ENCODE measurements at regions of chr5 and their contacts with region 1.

Region 1: GRCh38 chr5:147628058-147628895 is 118.4 kb upstream of the DPYSL3 start:
- DNase-seq: peak; percentile 55
- ATAC-seq: peak; percentile 98
- H3K4me3 ChIP-seq: no peak overlapping the region
- H3K27ac ChIP-seq: no peak overlapping the region
- H3K4me1 ChIP-seq: no peaks in the 10 kb centered on the region
- H3K27me3 ChIP-seq: peaks cover 6% of the 10 kb centered on the region
- CTCF ChIP-seq: peak; percentile 67
- POLR2A ChIP-seq: no peak
- RAD21 ChIP-seq: peak; percentile 62

Region 2: DNA sequence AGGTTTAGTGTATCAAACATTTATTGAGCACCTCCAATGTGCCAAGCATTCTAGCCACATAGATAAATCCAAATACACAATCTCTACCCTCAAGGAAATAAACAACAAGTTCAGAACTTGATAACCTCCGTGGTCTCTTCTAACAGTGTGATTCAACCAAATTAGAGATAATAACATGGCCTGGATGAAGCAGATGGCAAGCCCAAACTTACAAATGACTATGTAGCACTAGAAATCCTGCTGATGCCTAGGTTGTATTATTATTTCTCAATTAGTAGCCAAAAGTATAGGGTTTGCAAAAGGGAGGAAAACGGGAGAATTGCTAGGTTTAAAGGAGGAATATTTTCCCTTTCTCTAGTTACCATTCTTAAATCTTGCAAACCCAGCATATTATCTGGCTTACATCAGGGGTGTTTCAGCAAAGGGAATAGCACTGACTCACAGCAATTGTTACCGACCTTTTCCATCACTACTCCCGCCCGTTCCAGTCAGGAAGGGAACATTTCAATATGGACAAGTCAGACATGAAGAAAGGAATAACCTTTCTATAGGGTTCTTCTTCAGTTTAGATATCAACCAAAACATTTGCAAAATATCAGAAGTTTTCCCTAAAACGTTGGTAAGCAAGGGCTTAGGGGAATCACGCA is 120.7 kb before region 1 on chr5:
- CTCF ChIA-PET with region 1: no interaction called
- POLR2A ChIA-PET with region 1: no interaction called
- dilution Hi-C with region 1: no loop called
- in situ Hi-C with region 1: no loop called
- intact Hi-C with region 1: no loop called
- DNase-seq: peak; percentile 78
- ATAC-seq: peak; percentile 16; the same call in 1 of the 2 replicates
- H3K4me3 ChIP-seq: peak overlapping the region; percentile 56; the same call in 1 of the 2 replicates
- H3K27ac ChIP-seq: no peak overlapping the region
- H3K4me1 ChIP-seq: peaks cover 8% of the 10 kb centered on the region
- H3K27me3 ChIP-seq: no peaks in the 10 kb centered on the region
- CTCF ChIP-seq: no peak
- POLR2A ChIP-seq: no peak
- RAD21 ChIP-seq: 0 out of 2 replicates have a peak, but pooled peaks have one; percentile 2

Region 3: GRCh38 chr5:147822686-147823491 is 194.6 kb after region 1 on chr5:
- CTCF ChIA-PET with region 1: interaction called, 16 read pairs
- POLR2A ChIA-PET with region 1: no interaction called
- dilution Hi-C with region 1: no loop called
- in situ Hi-C with region 1: loop called (anchors 5 kb)
- intact Hi-C with region 1: loop called (anchors 1 kb)
- DNase-seq: peak; percentile 61
- ATAC-seq: peak; percentile 85
- H3K4me3 ChIP-seq: no peak overlapping the region
- H3K27ac ChIP-seq: no peak overlapping the region
- H3K4me1 ChIP-seq: no peaks in the 10 kb centered on the region
- H3K27me3 ChIP-seq: no peaks in the 10 kb centered on the region
- CTCF ChIP-seq: peak; percentile 93
- POLR2A ChIP-seq: 0 out of 2 replicates have a peak, but pooled peaks have one; percentile 20
- RAD21 ChIP-seq: peak; percentile 89

Region 4: GRCh38 chr5:148237785-148238184 is 609.5 kb after region 1 on chr5:
- CTCF ChIA-PET with region 1: no interaction called
- POLR2A ChIA-PET with region 1: no interaction called
- dilution Hi-C with region 1: no loop called
- in situ Hi-C with region 1: no loop called
- intact Hi-C with region 1: no loop called
- DNase-seq: no peak
- ATAC-seq: no peak
- H3K4me3 ChIP-seq: no peak overlapping the region
- H3K27ac ChIP-seq: no peak overlapping the region
- H3K4me1 ChIP-seq: no peaks in the 10 kb centered on the region
- H3K27me3 ChIP-seq: no peaks in the 10 kb centered on the region
- CTCF ChIP-seq: no peak
- POLR2A ChIP-seq: no peak
- RAD21 ChIP-seq: no peak

Measured in IMR-90 (cell line).